Activated CD8-positive, alpha-beta T cell treated with anti-CD3 and anti-CD28 coated beads for 36 hours (primary cell): ENCODE measurements at regions of chr3 and their contacts with region 1.

Region 1: GRCh38 chr3:10322352-10322710 is 1.4 kb upstream of the SEC13 start:
- DNase-seq: peak; percentile 40
- ATAC-seq: peak; percentile 38
- H3K4me3 Mint-ChIP-seq: no peak overlapping the region
- H3K27ac Mint-ChIP-seq: peak overlapping the region; percentile 13
- H3K4me1 Mint-ChIP-seq: peaks cover 18% of the 10 kb centered on the region
- H3K27me3 Mint-ChIP-seq: peaks cover 2% of the 10 kb centered on the region
- CTCF ChIP-seq: peak; percentile 62

Region 2: DNA sequence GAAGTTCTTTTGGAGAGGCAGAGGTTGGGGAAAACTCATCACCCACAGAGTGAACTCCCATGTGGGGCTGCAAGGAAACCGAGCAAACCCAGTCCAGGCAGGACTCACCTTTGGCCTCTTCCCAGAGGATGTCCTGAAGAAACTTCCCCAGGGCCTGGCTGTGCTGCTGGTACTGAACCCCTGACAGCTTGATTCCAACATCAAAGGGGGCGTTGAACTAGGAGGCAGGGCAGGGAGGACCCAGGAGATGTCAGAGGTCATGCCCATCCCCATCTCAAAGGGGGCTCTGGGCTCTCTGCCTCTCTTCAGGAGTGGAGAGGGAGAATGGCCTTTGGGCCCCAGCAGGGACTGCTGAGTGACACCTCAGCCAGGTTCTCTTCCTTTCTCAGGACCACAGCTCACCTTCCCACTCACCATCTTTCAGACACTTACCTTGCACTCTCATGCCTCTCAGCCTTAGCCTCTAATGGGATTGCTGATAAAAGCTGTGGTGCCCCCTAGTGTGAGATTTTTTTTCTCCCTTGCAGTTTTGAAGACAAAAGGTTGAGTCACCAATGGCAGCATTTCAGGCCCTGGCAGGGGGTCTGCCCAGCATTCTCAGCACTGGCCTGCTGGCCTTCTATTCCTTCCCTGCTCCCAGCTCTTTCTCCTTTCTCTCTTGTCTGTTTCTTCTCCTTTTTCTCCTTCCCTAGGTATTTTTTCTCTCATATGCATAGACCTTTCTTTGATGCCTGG is 35.6 kb before region 1 on chr3:
- CTCF ChIA-PET with region 1: interaction called, 4 read pairs
- POLR2A ChIA-PET with region 1: interaction called, 11 read pairs
- intact Hi-C with region 1: no loop called
- DNase-seq: peak; percentile 60
- ATAC-seq: peak; percentile 49
- H3K4me3 Mint-ChIP-seq: no peak overlapping the region
- H3K27ac Mint-ChIP-seq: no peak overlapping the region
- H3K4me1 Mint-ChIP-seq: peaks cover 35% of the 10 kb centered on the region
- H3K27me3 Mint-ChIP-seq: no peaks in the 10 kb centered on the region
- CTCF ChIP-seq: peak; percentile 37

Region 3: DNA sequence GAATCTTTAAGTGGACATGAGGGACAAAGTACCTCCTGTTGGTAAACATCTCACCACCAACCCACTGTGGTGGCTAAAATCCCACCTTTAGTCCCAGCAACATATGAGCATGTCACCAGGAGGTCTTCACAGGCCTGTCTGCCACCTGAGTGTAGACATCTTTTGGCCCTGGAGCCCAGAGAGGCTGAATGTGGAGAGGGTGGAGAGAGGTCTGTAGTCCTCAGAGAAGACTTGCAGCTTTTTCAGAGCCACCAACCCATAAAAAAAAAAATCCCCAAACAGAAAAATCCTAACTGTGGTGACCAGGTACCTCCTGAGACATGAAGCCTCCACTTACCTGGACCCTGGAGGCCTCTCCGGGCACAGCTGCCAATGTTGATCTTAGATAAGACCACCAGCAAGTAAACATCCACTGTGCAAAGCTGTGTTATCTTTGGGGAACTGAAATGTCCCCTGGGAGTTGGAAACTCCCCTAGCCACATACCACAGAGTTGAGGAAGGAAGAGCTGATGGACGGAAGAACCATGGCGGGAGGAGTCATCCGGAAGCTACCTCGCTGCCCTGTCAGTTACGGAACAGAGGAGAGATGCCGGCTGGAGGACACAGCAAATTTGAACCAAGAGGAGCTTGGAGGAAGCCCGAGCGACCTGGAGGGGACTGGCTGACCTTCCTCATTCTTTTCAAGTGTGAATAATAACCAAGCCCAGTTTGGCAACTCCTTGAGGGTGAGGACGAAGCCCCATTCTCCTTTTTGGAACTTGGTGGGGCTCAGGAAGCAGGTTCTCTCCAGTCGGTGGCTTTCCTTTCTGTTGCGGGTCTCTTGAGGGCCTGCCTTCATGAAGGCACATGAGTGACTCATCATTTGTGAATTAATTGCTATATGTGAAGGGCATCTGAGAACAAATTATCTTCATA is 29.6 kb before region 1 on chr3 and contains the start of gene GHRL:
- CTCF ChIA-PET with region 1: interaction called, 4 read pairs
- POLR2A ChIA-PET with region 1: interaction called, 11 read pairs
- intact Hi-C with region 1: no loop called
- DNase-seq: no peak
- ATAC-seq: peak; percentile 24
- H3K4me3 Mint-ChIP-seq: no peak within 1 kb of the TSS
- H3K27ac Mint-ChIP-seq: peak within 1 kb of the TSS; percentile 36
- H3K4me1 Mint-ChIP-seq: peaks cover 9% of the 10 kb centered on the region
- H3K27me3 Mint-ChIP-seq: no peaks in the 10 kb centered on the region
- CTCF ChIP-seq: no peak
- total RNA-seq, gene GHRL: 0.22 TPM in 1 of 2 experiments, not detected in the other

Region 4: GRCh38 chr3:10303785-10304184 is 18.5 kb before region 1 on chr3:
- CTCF ChIA-PET with region 1: interaction called, 3 read pairs
- POLR2A ChIA-PET with region 1: interaction called, 10 read pairs
- intact Hi-C with region 1: no loop called
- DNase-seq: no peak
- ATAC-seq: no peak
- H3K4me3 Mint-ChIP-seq: no peak overlapping the region
- H3K27ac Mint-ChIP-seq: peak overlapping the region; percentile 0
- H3K4me1 Mint-ChIP-seq: peaks cover 12% of the 10 kb centered on the region
- H3K27me3 Mint-ChIP-seq: no peaks in the 10 kb centered on the region
- CTCF ChIP-seq: no peak

Region 5: DNA sequence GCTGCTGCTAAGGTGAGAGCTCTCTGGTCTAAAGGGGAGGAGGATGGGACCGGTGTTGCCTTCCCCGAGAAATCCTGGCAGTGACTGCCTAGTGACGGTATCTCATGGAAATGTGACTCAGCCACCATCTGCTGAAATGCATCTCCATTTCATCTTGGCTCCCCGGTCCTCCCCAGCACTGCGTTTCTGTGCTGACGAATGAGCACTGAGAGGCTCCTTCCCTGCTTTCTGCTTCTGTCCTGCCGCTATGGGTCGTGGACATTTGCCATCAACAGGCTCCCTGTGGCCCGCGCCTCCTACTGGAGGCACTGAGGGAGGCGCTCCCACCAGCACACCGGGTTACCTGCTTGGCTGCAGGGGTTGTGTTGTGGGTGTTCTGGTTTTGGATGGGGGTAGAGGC is 12.1 kb after region 1 on chr3:
- CTCF ChIA-PET with region 1: interaction called, 13 read pairs
- POLR2A ChIA-PET with region 1: no interaction called
- intact Hi-C with region 1: no loop called
- DNase-seq: no peak
- ATAC-seq: no peak
- H3K4me3 Mint-ChIP-seq: no peak overlapping the region
- H3K27ac Mint-ChIP-seq: no peak overlapping the region
- H3K4me1 Mint-ChIP-seq: peaks cover 13% of the 10 kb centered on the region
- H3K27me3 Mint-ChIP-seq: peaks cover 4% of the 10 kb centered on the region
- CTCF ChIP-seq: no peak

Region 6: GRCh38 chr3:10738688-10739372 is 416.5 kb after region 1 on chr3:
- CTCF ChIA-PET with region 1: interaction called, 14 read pairs
- POLR2A ChIA-PET with region 1: no interaction called
- intact Hi-C with region 1: no loop called
- DNase-seq: peak; percentile 80
- ATAC-seq: peak; percentile 74
- H3K4me3 Mint-ChIP-seq: peak overlapping the region; percentile 31
- H3K27ac Mint-ChIP-seq: no peak overlapping the region
- H3K4me1 Mint-ChIP-seq: peaks cover 4% of the 10 kb centered on the region
- H3K27me3 Mint-ChIP-seq: peaks cover 39% of the 10 kb centered on the region
- CTCF ChIP-seq: peak; percentile 83